GM12878 (cell line): ENCODE measurements at regions of chr5 and their contacts with region 1.

Region 1: DNA sequence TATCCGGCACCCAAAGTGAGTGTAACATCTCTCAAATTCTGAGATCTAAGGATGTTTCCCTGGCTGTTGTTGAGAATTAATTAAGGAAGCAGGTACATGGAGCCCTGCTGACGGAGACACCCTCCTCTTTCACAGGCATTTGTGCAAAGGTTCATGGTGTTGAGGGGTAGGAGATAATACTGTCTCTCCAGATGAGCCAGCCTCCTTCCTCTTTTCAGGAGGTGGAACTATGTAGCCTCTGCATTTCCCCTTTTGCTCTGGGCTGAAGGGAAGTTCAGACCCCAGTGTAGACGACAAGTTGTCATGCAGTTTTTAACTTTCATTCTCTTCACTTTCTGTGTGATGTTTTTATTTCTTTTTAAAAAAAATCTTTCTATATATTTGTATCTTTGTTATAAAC is 107.5 kb downstream of the GALNT10 start:
- DNase-seq: no peak
- ATAC-seq: no peak
- H3K4me3 ChIP-seq: no peak overlapping the region
- H3K27ac ChIP-seq: no peak overlapping the region
- H3K4me1 ChIP-seq: no peaks in the 10 kb centered on the region
- H3K27me3 ChIP-seq: no peaks in the 10 kb centered on the region
- CTCF ChIP-seq: no peak
- EP300 ChIP-seq: no peak
- POLR2A ChIP-seq: no peak
- RAD21 ChIP-seq: no peak

Region 2: GRCh38 chr5:154287136-154287535 is 10.9 kb before region 1 on chr5:
- CTCF ChIA-PET with region 1: interaction called, 3 read pairs
- POLR2A ChIA-PET with region 1: interaction called, 5 read pairs
- RAD21 ChIA-PET with region 1: no interaction called
- SMC1A ChIA-PET with region 1: interaction called, 13 read pairs
- in situ Hi-C with region 1: no loop called
- intact Hi-C with region 1: no loop called
- DNase-seq: no peak
- ATAC-seq: no peak
- H3K4me3 ChIP-seq: no peak overlapping the region
- H3K27ac ChIP-seq: no peak overlapping the region
- H3K4me1 ChIP-seq: peaks cover 32% of the 10 kb centered on the region
- H3K27me3 ChIP-seq: no peaks in the 10 kb centered on the region
- CTCF ChIP-seq: no peak
- EP300 ChIP-seq: no peak
- POLR2A ChIP-seq: no peak
- RAD21 ChIP-seq: no peak